ENCODE measurements at regions of chr19 and their contacts with region 1.

Region 1: DNA sequence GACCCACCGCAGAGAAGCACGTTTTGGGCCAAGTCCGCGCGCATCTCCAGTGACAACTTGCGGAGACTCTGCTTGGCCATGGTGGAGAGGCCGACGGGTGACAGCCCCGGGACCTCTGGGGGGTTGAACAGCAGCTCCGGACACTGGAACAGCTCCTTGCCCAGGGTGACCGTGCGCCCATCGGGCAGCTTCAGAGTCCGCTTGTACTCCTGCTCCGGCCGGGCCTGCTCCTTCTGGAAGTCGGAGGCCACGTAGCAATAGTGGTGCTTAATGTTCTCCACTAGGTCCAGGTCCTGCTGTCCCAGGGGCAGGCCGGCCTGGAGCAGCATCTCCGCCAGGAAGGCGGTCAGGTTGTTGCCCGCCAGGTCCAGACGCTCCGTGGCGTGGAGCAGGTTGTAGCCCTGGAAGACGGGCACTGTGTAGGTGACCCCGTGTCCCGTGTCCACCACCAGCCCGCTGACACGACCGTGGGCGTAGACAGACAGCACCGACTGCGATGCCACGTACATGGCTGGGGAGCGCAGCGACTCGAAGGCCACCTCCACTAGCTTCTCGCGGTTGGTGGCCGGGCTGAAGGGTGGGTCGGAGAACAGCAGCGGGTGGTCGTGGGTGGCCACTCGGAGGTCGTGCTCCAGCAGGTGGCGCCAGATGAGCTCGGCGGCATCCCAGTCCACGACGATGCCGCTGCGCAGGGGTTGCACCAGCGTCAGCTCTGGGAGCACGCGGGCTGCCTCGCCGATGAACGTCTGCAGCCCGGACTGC is 743 bp downstream of the ACTL9 start:
- DNase-seq: no peak
- H3K4me3 Mint-ChIP-seq: no peak overlapping the region
- H3K27ac Mint-ChIP-seq: no peak overlapping the region
- H3K4me1 Mint-ChIP-seq: peaks cover 66% of the 10 kb centered on the region
- H3K27me3 Mint-ChIP-seq: peaks cover 4% of the 10 kb centered on the region

Region 2: DNA sequence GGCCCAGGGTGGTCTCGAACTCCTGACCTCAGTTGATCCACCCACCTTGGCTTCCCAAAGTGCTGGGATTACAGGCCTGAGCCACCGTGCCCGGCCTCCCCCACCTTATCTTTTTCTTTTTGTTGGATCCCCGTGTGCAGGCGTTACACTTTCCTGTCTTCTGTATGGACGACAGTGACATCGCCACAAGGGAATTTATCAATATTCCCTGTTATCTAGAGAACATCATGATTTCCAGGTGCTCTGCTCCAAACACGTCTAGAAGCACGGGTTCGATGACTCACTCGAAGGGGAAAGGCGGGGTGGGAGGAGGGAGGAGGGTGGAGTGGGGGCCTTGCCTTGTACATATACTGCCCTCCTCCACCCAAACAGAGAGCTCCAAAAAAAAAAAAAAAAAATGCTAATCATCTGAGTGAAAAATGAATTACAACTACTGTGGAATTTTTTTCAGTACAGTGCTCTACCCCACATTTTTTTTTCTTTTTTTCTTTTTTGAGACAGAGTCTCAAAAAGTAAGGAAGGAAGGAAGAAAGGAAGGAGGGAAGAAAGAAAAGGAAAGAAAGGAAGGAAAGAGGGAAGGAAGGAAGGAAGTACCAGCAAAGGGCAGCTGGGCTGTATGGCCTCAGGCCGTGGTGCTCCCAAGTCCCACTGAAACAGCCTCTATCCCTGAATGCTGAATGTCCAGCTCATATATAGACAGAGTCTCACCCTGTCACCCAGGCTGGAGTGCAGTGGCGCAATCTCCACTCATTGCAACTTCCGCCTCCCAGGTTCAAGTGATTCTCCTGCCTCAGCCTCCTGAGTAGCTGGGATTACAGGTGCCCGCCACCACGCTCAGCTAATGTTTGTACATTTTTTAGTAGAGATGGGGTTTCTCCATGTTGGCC is 1440.5 kb before region 1 on chr19:
- intact Hi-C with region 1: no loop called
- DNase-seq: no peak
- H3K4me3 Mint-ChIP-seq: no peak overlapping the region
- H3K27ac Mint-ChIP-seq: no peak overlapping the region
- H3K4me1 Mint-ChIP-seq: no peaks in the 10 kb centered on the region
- H3K27me3 Mint-ChIP-seq: peaks cover 4% of the 10 kb centered on the region

Region 3: DNA sequence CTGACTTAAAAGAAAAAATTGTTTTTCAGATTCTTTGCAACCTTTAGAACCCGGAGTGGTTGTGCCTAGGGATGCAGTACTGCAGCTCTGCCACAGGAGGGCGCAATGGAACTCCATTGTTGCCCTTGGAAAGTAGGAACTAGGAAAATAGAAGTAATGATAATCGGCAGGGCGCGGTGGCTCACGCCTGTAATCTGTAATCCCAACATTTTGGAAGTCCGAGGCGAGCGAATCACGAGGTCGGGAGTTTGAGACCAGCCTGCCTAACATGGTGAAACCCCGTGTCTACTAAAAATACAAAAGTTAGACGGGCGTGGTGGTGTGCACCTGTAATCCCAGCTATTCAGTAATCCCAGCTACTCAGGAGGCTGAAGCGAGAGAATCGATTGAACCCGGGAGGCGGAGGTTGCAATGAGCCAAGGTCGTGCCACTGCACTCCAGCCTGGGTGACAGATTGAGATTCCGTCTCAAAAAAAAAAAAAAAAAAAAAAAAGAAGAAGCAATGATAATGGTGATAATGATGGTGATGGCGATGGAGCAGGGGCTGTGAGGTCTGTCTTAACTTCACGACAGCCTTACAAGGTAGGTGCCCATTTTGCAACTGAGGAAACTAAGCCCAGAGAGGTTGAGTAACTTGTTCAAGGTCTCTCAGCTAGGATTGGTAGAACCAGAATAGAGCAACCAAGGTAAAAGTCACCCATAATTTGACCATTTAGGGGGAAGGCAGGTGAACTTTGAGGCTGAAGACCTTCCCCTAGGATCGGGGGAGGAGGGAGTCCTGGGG is 81.8 kb before region 1 on chr19:
- intact Hi-C with region 1: loop called (anchors 1 kb)
- DNase-seq: peak; percentile 24
- H3K4me3 Mint-ChIP-seq: no peak overlapping the region
- H3K27ac Mint-ChIP-seq: no peak overlapping the region
- H3K4me1 Mint-ChIP-seq: peaks cover 5% of the 10 kb centered on the region
- H3K27me3 Mint-ChIP-seq: peaks cover 8% of the 10 kb centered on the region

Region 4: GRCh38 chr19:8654591-8655339 is 43.1 kb before region 1 on chr19:
- intact Hi-C with region 1: loop called (anchors 1 kb)
- DNase-seq: peak; percentile 39
- H3K4me3 Mint-ChIP-seq: peak overlapping the region; percentile 56
- H3K27ac Mint-ChIP-seq: no peak overlapping the region
- H3K4me1 Mint-ChIP-seq: peaks cover 5% of the 10 kb centered on the region
- H3K27me3 Mint-ChIP-seq: peaks cover 8% of the 10 kb centered on the region

Region 5: GRCh38 chr19:8663920-8664670 is 33.8 kb before region 1 on chr19:
- intact Hi-C with region 1: loop called (anchors 2 kb)
- DNase-seq: no peak
- H3K4me3 Mint-ChIP-seq: no peak overlapping the region
- H3K27ac Mint-ChIP-seq: peak overlapping the region; percentile 57
- H3K4me1 Mint-ChIP-seq: peaks cover 48% of the 10 kb centered on the region
- H3K27me3 Mint-ChIP-seq: peaks cover 5% of the 10 kb centered on the region

Region 6: DNA sequence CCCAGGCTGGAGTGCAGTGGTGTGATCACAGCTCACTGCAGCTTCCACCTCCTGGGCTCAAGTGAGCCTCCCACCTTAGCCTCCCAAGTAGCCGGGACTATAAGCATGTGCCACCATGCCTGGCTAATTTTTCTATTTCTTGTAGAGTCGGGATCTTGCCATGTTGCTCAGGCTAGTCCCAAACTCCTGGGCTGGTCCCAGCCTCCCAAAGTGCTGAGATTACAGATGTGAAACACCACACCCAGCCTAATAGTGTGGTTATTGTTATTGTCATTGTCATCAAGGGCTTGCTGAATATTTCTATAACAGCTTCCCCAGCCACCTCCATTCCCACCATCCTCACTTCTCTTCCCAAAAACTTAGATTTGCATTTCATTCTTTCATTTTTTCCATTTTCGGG is 26.4 kb after region 1 on chr19:
- intact Hi-C with region 1: no loop called
- DNase-seq: no peak
- H3K4me3 Mint-ChIP-seq: no peak overlapping the region
- H3K27ac Mint-ChIP-seq: no peak overlapping the region
- H3K4me1 Mint-ChIP-seq: no peaks in the 10 kb centered on the region
- H3K27me3 Mint-ChIP-seq: peaks cover 4% of the 10 kb centered on the region

Region 7: DNA sequence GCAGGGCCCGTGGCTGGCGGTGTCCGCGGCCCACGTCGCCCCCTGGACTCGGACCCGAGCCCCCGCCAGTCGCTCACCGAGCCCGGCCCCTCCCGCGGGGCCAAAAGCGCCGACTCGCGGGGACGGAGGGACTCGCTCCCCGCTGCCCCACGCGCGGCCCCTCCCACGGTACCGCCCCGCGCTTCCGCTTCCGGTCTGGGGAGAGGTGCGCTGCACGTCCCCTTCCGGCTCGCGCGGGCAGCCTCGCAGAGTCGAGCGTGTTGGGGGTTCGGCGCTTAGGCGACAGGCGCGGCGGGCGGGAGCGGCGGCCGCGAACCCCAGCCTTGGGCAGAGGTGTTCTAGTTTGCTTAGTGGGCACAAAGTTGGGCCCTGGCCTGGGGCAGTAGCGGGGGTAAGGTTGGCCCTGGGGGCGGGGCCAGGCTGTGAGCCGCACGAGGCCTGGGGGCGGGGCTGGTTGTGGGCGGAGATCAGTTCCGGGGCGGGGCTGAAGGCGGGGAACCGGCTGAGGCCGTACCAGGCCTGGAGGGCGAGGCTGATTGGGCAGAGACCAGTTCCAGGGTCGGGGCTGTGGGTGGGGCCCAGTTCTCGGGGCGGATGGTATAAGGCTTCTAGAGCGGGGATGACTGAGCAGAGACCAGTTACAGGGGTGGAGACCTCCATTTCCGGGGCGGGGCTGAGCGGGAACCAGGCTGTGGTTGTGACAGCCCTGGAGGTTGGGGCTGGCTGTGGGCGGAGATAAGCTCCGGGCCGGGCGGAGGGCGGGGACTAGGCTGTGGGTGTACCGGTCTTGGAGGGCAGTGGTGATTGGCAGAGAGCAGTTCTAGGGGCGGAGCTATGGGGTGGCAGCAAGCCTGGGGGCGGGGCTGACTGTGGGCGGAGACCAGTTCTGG is 134.5 kb after region 1 on chr19 and contains the starts of genes MBD3L1 and ZNF558:
- intact Hi-C with region 1: loop called (anchors 1 kb)
- DNase-seq: peak; percentile 98
- H3K4me3 Mint-ChIP-seq: peak within 1 kb of the TSS; percentile 84
- H3K27ac Mint-ChIP-seq: peak within 1 kb of the TSS; percentile 95
- H3K4me1 Mint-ChIP-seq: peaks cover 20% of the 10 kb centered on the region
- H3K27me3 Mint-ChIP-seq: no peaks in the 10 kb centered on the region
- total RNA-seq, gene MBD3L1: not detected in 2 replicates
- total RNA-seq, gene ZNF558: 18.7 and 23.2 TPM in 2 replicates

Measured in activated T-helper 1 cell treated with anti-CD3 and anti-CD28 coated beads, Interleukin-12 subunit alpha, Interleukin-12 subunit beta, Interleukin-2, Interleukin-4 antibody, amounts not matched to agents 30 ng/mL and 10 ng/mL and 1 ng/mL, durations not matched to agents 14 hours and 24 hours and 36 hours (primary cell).